Activated CD4-positive, alpha-beta memory T cell treated with anti-CD3 and anti-CD28 coated beads, Interleukin-2, amount 10 ng/mL, durations not matched to agents 7 days and 5 days (primary cell): ENCODE measurements at regions of chr1 and their contacts with region 1.

Region 1: DNA sequence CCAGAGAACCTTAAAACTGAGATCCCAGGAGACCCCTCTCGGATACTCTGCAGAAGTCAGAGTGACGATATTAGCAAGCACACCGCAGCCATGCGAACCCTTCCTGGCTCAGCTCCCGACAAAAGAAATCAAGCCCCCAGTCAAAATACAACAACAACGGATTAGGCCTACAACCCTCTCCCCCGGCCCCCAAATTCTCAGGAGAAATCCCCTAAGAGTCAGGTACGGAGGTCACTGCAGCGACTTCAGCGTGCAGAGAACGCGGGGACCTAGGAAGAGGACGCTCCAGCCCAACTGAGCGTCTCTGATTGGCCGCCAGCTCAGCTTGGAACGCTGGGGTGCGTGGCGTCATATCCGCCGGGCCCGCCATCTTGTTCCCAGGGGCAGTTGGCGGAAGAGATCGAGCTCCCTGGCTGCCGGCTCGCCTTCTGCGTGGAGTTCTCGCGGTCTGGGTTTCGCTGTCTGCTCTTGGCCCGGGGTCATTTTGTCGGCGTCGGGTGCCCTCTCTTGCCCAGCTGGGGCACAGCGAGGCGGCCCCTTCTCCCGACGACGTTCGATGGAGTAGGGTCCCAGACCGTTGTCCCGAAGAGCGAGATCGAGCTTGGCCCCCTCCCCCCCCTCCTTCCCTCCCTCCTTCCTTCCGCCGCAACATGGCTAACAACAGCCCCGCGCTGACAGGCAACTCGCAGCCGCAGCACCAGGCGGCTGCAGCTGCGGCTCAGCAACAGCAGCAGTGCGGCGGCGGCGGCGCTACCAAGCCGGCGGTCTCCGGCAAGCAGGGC is at the start of gene PRPF38B:
- DNase-seq: peak; percentile 96
- H3K4me3 Mint-ChIP-seq: peak within 1 kb of the TSS; percentile 91
- H3K27ac Mint-ChIP-seq: peak within 1 kb of the TSS; percentile 96
- H3K4me1 Mint-ChIP-seq: peaks cover 43% of the 10 kb centered on the region
- H3K27me3 Mint-ChIP-seq: no peaks in the 10 kb centered on the region
- total RNA-seq, gene PRPF38B: 68.5 to 70.5 TPM

Region 2: DNA sequence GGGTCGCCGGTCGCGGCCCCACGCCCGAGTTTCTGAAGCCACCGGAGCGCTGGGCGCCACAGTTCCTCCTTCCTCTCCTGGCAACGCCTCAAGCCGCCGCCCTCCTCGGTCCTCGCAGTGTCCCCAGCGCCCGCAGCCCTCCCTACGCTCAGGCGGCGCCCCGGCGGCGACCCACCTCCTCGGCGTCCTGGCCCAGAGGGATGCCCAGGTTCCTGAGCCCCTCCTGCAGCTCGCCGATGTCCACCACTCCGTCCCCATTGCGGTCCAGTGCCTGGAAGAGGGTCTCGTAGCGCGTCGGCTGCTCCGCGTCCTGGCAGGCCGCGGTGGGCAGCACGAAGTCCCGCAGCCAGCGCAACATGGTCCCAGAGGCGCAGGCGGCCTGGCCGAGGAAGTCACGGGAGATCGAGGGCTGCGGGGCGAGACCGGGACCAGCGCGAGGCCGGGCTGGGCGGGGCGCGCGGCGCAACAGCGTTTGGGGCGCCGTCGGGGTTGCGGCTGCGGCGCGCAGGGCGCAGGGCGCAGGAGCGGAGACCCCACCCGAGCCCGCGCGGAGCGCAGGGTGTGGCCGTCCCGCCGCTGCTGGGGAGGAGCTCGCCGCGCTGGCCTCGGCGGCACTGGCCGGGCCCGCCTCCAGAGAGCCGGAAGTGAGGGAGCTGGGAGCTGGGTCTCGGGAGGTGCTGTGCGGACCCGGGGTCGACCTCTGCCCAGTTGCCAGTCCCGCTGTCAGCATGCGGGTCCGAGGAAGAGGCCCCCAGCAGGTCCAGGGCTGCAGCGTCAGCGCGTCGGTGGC is 492.2 kb before region 1 on chr1 and contains the start of gene SLC25A24:
- CTCF ChIA-PET with region 1: interaction called, 9 read pairs
- POLR2A ChIA-PET with region 1: interaction called, 10 read pairs
- DNase-seq: peak; percentile 86
- H3K4me3 Mint-ChIP-seq: peak within 1 kb of the TSS; percentile 84
- H3K27ac Mint-ChIP-seq: peak within 1 kb of the TSS; percentile 78
- H3K4me1 Mint-ChIP-seq: peaks cover 38% of the 10 kb centered on the region
- H3K27me3 Mint-ChIP-seq: peaks cover 7% of the 10 kb centered on the region
- total RNA-seq, gene SLC25A24: 32.5 to 33.2 TPM

Region 3: GRCh38 chr1:108617008-108617723 is 75.0 kb before region 1 on chr1:
- CTCF ChIA-PET with region 1: no interaction called
- POLR2A ChIA-PET with region 1: no interaction called
- DNase-seq: no peak
- H3K4me3 Mint-ChIP-seq: no peak overlapping the region
- H3K27ac Mint-ChIP-seq: no peak overlapping the region
- H3K4me1 Mint-ChIP-seq: no peaks in the 10 kb centered on the region
- H3K27me3 Mint-ChIP-seq: no peaks in the 10 kb centered on the region

Region 4: GRCh38 chr1:108643492-108644335 is 48.4 kb before region 1 on chr1:
- CTCF ChIA-PET with region 1: interaction called, 64 read pairs
- POLR2A ChIA-PET with region 1: interaction called, 338 read pairs
- DNase-seq: peak; percentile 60
- H3K4me3 Mint-ChIP-seq: peak overlapping the region; percentile 8
- H3K27ac Mint-ChIP-seq: peak overlapping the region; percentile 98
- H3K4me1 Mint-ChIP-seq: peaks cover 76% of the 10 kb centered on the region
- H3K27me3 Mint-ChIP-seq: no peaks in the 10 kb centered on the region

Region 5: GRCh38 chr1:108679582-108680213 is 12.4 kb before region 1 on chr1:
- CTCF ChIA-PET with region 1: interaction called, 6 read pairs
- POLR2A ChIA-PET with region 1: interaction called, 45 read pairs
- DNase-seq: no peak
- H3K4me3 Mint-ChIP-seq: peak overlapping the region; percentile 10
- H3K27ac Mint-ChIP-seq: peak overlapping the region; percentile 3
- H3K4me1 Mint-ChIP-seq: peaks cover 13% of the 10 kb centered on the region
- H3K27me3 Mint-ChIP-seq: peaks cover 6% of the 10 kb centered on the region

Region 6: DNA sequence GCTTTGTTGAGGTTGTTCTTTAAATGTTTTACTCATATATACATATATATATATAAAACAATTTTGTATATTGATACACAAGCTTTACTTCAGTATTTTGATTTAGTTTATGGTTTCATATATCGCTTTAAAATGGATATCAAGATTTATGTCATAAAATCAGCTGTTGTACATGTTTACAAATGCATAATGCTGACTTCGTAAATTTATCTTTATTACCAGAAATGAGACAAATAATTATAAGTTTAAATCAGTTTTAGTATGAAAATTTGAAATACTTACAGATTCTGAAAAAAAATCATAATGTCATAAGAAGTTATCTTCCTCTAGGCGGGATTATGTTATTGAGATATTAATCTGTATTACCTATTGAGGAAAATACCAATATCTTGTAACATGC is 61.2 kb after region 1 on chr1:
- CTCF ChIA-PET with region 1: interaction called, 4 read pairs
- POLR2A ChIA-PET with region 1: interaction called, 57 read pairs
- DNase-seq: no peak
- H3K4me3 Mint-ChIP-seq: no peak overlapping the region
- H3K27ac Mint-ChIP-seq: no peak overlapping the region
- H3K4me1 Mint-ChIP-seq: peaks cover 27% of the 10 kb centered on the region
- H3K27me3 Mint-ChIP-seq: no peaks in the 10 kb centered on the region

Region 7: GRCh38 chr1:109099938-109100773 is 408.0 kb after region 1 on chr1:
- CTCF ChIA-PET with region 1: interaction called, 10 read pairs
- POLR2A ChIA-PET with region 1: interaction called, 18 read pairs
- DNase-seq: peak; percentile 97
- H3K4me3 Mint-ChIP-seq: peak overlapping the region; percentile 99
- H3K27ac Mint-ChIP-seq: peak overlapping the region; percentile 94
- H3K4me1 Mint-ChIP-seq: peaks cover 12% of the 10 kb centered on the region
- H3K27me3 Mint-ChIP-seq: no peaks in the 10 kb centered on the region